ENCODE measurements at regions of chr2 and their contacts with region 1.

Region 1: GRCh38 chr2:152421521-152422370 is 86.8 kb downstream of the FMNL2 start:
- DNase-seq: peak; percentile 43
- H3K4me3 Mint-ChIP-seq: no peak overlapping the region
- H3K27ac Mint-ChIP-seq: peak overlapping the region; percentile 32
- H3K4me1 Mint-ChIP-seq: peaks cover 29% of the 10 kb centered on the region
- H3K27me3 Mint-ChIP-seq: peaks cover 19% of the 10 kb centered on the region

Region 2: DNA sequence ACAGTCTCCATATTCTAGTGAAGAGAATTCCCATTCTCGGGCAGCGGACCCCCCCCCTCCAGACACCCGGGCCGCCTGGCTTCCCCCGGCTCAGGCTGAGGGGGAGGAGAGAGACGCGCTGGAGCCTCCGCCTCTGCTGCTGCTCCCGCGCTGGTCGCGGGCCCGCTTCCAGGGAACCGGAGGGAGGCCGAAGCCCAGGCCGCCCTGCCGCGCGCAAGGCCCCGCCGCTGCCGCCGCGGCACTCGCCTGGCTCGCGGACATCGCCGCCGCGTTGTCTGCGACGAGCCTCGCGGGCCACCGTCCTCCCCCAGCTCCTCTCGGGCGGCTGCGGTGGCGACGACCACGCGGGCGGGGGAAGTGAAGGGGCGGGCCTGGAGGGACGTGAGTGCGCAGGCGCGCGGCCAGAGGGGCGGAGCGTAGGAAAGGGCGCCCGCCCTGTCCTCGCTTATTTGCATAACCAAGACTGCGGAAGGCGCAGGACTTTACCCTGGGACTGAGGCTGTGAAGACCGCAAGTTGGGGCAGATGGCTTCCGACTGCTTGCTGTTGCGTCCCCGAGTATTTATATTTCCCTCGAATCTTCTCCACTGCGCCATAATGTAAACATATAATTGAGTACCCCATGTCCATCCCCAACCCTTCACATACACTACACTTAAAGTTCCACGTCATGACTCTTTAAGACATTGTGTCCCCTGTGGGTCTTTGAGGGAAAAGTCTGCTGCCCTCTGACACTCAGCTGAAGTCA is 593.4 kb before region 1 on chr2 and contains the start of gene ARL5A:
- CTCF ChIA-PET with region 1: no interaction called
- intact Hi-C with region 1: loop called (anchors 10 kb)
- DNase-seq: peak; percentile 94
- H3K4me3 Mint-ChIP-seq: peak within 1 kb of the TSS; percentile 95
- H3K27ac Mint-ChIP-seq: peak within 1 kb of the TSS; percentile 82
- H3K4me1 Mint-ChIP-seq: peaks cover 39% of the 10 kb centered on the region
- H3K27me3 Mint-ChIP-seq: no peaks in the 10 kb centered on the region
- total RNA-seq, gene ARL5A: 40.6 to 43.7 TPM

Region 3: GRCh38 chr2:152335010-152335725 is 86.6 kb before region 1 on chr2 and contains the start of gene FMNL2:
- CTCF ChIA-PET with region 1: no interaction called
- intact Hi-C with region 1: loop called (anchors 1 kb)
- DNase-seq: peak; percentile 64
- H3K4me3 Mint-ChIP-seq: peak within 1 kb of the TSS; percentile 80
- H3K27ac Mint-ChIP-seq: no peak within 1 kb of the TSS
- H3K4me1 Mint-ChIP-seq: peaks cover 8% of the 10 kb centered on the region
- H3K27me3 Mint-ChIP-seq: peaks cover 41% of the 10 kb centered on the region
- total RNA-seq, gene FMNL2: 2.5 to 2.7 TPM

Region 4: GRCh38 chr2:152407204-152407721 is 14.5 kb before region 1 on chr2:
- CTCF ChIA-PET with region 1: no interaction called
- intact Hi-C with region 1: loop called (anchors 1 kb)
- DNase-seq: peak; percentile 77
- H3K4me3 Mint-ChIP-seq: peak overlapping the region; percentile 47
- H3K27ac Mint-ChIP-seq: peak overlapping the region; percentile 64
- H3K4me1 Mint-ChIP-seq: peaks cover 32% of the 10 kb centered on the region
- H3K27me3 Mint-ChIP-seq: peaks cover 28% of the 10 kb centered on the region

Region 5: GRCh38 chr2:152445791-152446201 is 24.1 kb after region 1 on chr2:
- CTCF ChIA-PET with region 1: no interaction called
- intact Hi-C with region 1: loop called (anchors 1 kb)
- DNase-seq: peak; percentile 26
- H3K4me3 Mint-ChIP-seq: no peak overlapping the region
- H3K27ac Mint-ChIP-seq: no peak overlapping the region
- H3K4me1 Mint-ChIP-seq: peaks cover 19% of the 10 kb centered on the region
- H3K27me3 Mint-ChIP-seq: peaks cover 24% of the 10 kb centered on the region

Region 6: DNA sequence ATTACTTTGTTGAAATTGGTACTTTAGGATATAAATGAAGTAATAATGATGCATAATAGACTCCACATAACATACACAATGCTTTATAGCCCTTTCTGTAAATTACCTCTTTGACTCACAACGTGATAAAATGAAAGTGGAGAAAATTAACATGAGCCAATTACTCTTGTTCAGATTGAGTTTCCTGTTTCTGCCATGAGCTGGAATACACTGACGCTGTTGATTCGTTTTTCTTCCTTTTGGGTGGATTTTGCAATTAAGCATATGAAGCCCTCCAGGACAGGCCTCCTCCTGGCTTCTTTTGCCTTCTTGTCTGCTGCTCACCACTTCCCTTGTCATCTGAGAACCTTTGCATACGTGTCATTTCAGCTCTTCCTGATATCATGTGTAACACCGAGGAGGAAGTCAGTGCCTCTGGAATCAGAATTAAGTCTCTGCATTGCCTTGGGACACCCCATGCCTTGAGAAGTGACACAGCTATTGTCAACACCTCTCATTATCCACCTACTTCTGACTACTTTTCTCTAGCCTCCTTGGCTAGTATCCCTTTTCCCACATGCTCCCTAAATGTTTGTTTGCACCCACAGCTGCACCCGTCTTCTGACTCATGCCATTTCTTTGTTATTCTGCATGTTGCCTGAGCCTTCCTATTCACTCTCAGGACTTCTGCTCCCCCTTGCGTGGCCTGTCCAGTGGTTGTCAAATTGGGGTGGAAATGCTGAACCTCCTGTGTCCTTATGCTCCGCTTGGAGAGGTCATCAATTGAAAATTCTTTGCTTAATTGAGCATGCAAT is 47.4 kb after region 1 on chr2:
- CTCF ChIA-PET with region 1: no interaction called
- intact Hi-C with region 1: loop called (anchors 2 kb)
- DNase-seq: no peak
- H3K4me3 Mint-ChIP-seq: no peak overlapping the region
- H3K27ac Mint-ChIP-seq: no peak overlapping the region
- H3K4me1 Mint-ChIP-seq: peaks cover 9% of the 10 kb centered on the region
- H3K27me3 Mint-ChIP-seq: peaks cover 15% of the 10 kb centered on the region

Region 7: DNA sequence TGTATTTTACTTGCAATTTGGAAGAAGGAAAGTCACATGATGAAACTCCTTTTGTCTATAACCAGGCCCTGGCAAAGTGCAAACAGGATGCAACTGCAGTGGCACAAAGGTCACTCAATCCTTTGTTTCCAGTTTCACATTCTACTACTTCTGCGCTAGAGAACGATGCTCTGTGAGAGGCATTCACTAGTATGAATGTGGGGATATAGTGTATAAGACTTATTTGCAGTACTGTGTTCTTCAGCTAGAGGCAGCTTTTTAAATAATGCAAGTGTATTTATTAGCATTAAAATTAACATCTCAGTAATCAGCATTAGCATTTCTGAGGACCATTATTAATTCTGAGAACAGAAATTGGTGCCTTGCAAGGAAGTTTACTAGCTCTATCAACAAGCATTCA is 226.6 kb after region 1 on chr2:
- CTCF ChIA-PET with region 1: no interaction called
- intact Hi-C with region 1: no loop called
- DNase-seq: no peak
- H3K4me3 Mint-ChIP-seq: no peak overlapping the region
- H3K27ac Mint-ChIP-seq: no peak overlapping the region
- H3K4me1 Mint-ChIP-seq: no peaks in the 10 kb centered on the region
- H3K27me3 Mint-ChIP-seq: no peaks in the 10 kb centered on the region

Region 8: DNA sequence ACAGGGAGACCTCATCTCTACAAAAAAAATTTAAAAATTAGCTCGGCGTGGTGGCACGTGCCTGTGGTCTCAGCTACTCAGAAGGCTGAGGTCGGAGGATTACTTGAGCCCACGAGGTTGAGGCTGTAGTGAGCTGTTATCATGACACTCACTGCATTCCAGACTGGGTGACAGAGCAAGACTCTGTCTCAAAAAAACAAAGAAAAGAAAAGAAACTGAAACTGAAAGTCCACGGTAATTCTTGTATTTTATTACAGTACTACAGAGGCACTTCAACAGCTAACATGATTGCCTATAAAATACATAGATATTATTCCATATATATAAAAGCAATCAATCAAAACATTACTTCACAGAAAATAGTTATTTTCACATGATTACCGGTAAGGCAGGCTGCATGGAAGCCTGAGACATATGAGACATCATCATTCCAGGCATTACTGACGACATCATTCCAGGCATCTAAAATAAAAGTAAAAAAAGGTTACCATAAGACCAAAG is 272.5 kb after region 1 on chr2:
- CTCF ChIA-PET with region 1: no interaction called
- intact Hi-C with region 1: loop called (anchors 5 kb)
- DNase-seq: peak; percentile 56
- H3K4me3 Mint-ChIP-seq: peak overlapping the region; percentile 70
- H3K27ac Mint-ChIP-seq: peak overlapping the region; percentile 86
- H3K4me1 Mint-ChIP-seq: peaks cover 34% of the 10 kb centered on the region
- H3K27me3 Mint-ChIP-seq: no peaks in the 10 kb centered on the region